ENCODE measurements at regions of chr11 and their contacts with region 1.

Region 1: GRCh38 chr11:117946842-117947526 is 17.8 kb upstream of the TMPRSS13 start:
- DNase-seq: peak; percentile 88
- H3K4me3 ChIP-seq: no peak overlapping the region
- H3K27ac ChIP-seq: peak overlapping the region; percentile 9
- H3K4me1 ChIP-seq: peaks cover 18% of the 10 kb centered on the region
- H3K27me3 ChIP-seq: peaks cover 4 to 9% of the 10 kb centered on the region in 2 experiments
- CTCF ChIP-seq: peak; percentile 91 to 94
- POLR2A ChIP-seq: no peak

Region 2: DNA sequence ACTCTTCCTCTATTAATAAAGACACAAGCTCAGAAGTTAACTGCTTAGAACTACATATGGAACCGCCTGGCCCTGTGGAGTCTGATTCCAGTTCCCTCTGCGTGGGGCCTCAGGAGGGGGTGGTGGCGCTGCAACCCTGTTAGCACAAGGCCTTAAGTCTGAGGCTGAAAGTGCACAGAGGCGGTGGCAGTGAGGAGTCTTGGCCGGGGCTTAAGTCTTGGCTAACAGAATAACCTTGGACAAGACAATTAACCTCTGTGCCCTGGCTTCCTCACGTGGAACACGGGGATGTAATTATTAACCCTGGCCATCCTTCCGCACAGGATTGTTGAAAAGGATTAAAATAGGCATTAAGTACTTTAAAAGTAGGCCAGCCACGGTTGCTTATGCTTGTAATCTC is 427.8 kb before region 1 on chr11:
- CTCF ChIA-PET with region 1: no interaction called
- POLR2A ChIA-PET with region 1: no interaction called
- dilution Hi-C with region 1: no loop called
- intact Hi-C with region 1: no loop called
- DNase-seq: no peak
- H3K4me3 ChIP-seq: no peak overlapping the region
- H3K27ac ChIP-seq: no peak overlapping the region
- H3K4me1 ChIP-seq: no peaks in the 10 kb centered on the region
- H3K27me3 ChIP-seq: no peaks in the 10 kb centered on the region
- CTCF ChIP-seq: no peak
- POLR2A ChIP-seq: no peak

Region 3: DNA sequence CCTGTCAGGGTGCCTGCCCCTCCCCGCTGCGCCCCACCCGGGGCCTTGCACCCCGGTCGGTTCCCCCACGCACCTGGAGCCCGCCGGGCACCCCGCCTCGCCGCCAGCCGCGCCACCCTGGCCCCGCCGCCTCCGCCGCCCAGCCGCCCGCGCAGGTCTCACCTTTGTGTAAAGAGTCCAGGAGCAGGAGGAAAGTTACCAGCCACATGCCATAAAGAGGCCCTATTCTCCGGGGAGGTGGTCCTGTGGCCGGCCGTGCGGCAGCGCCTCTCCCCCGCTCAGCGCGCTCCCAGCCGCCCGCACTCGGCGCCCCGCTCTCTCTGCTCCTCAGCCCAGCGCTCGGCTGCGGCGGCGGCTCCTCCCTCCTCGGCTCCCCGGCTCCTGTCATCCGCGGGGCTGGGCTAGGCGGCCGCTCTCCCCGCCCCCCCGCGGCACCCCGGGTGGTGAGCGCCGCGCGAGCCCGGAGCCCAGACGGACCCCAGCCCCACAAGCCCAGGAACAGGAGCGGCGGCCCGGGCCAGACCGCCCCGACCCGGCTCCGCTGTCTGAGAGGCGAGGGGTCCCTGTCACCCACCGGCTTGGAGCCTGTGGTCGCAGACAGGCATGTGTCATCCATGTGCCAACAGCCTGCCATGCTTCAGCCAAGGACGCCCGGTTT is 150.0 kb before region 1 on chr11 and contains the start of gene DSCAML1:
- CTCF ChIA-PET with region 1: interaction called, 21 read pairs
- POLR2A ChIA-PET with region 1: no interaction called
- dilution Hi-C with region 1: no loop called
- intact Hi-C with region 1: no loop called
- DNase-seq: no peak
- H3K4me3 ChIP-seq: no peak within 1 kb of the TSS
- H3K27ac ChIP-seq: no peak within 1 kb of the TSS
- H3K4me1 ChIP-seq: no peaks in the 10 kb centered on the region
- H3K27me3 ChIP-seq: peaks cover 44 to 46% of the 10 kb centered on the region in 2 experiments
- CTCF ChIP-seq: no peak
- POLR2A ChIP-seq: no peak
- total RNA-seq, gene DSCAML1: not detected in 2 replicates

Region 4: GRCh38 chr11:117828611-117829368 is 118.2 kb before region 1 on chr11:
- CTCF ChIA-PET with region 1: interaction called, 520 read pairs
- POLR2A ChIA-PET with region 1: no interaction called
- dilution Hi-C with region 1: no loop called
- intact Hi-C with region 1: loop called (anchors 1 kb)
- DNase-seq: peak; percentile 54
- H3K4me3 ChIP-seq: no peak overlapping the region
- H3K27ac ChIP-seq: peak overlapping the region; percentile 2
- H3K4me1 ChIP-seq: peaks cover 28% of the 10 kb centered on the region
- H3K27me3 ChIP-seq: no peaks in the 10 kb centered on the region
- CTCF ChIP-seq: no peak
- POLR2A ChIP-seq: no peak

Region 5: DNA sequence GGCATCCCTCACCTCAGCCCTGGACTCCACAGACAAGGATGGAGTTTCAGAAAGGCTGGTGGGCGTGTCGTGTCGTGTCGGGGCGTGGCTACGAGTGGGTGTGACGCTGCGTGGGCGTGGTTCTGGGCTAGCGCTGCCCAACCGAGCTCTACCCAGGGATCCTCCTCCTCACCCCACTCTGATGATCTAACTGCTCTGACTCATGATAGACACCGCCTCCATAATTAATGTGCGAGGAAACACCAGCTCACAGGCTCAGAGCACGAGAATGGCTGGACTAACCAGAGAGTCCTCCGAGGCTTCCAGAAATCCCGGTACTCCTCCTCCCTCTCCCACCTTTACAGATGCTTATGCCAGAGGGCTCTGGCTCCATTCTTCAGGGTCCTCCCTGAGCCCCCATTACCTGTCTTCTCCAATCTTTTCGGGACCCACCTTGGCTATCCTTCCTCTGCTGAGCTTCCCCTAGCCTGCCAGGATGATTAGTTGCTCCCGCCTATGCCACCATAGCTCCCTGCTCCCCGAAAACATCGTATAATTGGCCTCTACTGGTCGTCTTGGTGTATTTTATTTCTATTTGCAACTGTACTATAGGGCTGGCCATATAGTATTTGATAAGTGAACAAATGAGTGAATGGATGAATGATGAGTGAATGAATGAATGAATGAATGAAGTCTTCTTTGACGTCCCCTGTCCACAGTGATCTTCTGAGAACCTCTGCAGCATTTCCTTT is 39.6 kb before region 1 on chr11:
- CTCF ChIA-PET with region 1: interaction called, 46 read pairs
- POLR2A ChIA-PET with region 1: interaction called, 3 read pairs
- dilution Hi-C with region 1: no loop called
- intact Hi-C with region 1: loop called (anchors 1 kb)
- DNase-seq: peak; percentile 94
- H3K4me3 ChIP-seq: no peak overlapping the region
- H3K27ac ChIP-seq: peak overlapping the region; percentile 49
- H3K4me1 ChIP-seq: peaks cover 5% of the 10 kb centered on the region
- H3K27me3 ChIP-seq: no peaks in the 10 kb centered on the region
- CTCF ChIP-seq: no peak
- POLR2A ChIP-seq: no peak

Region 6: DNA sequence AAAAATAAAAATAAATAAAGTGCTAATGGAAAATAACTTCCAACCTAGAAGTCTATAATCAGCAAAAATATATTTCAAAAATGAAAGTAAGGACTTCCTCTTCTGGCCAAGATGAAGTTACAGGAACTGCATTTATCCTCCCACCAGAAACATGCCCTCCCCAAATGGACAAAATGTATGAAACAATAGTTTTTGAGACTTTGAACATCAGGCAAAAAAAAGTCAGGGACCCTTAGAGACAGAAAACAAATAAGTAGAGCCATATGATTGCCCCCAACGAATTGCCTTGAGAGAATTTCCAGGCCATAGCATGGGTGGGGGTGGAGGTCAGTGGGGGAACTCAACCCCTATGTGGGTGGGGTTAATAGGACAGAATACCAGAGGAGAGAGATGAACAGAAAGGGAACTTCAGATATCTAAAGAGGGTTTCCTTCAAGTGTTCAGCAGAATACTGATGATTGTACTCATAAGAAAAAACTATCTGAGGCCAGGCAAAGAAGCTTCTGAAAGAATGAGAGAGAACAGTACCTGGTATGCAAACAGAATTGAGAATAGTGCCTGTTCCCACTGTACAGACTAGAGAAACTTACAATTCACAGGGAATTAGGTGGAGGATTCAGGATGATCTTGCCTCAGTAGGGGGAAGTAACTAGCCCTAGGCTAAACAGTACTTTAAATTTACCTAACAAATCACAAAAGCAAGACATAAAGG is 12.6 kb after region 1 on chr11:
- CTCF ChIA-PET with region 1: interaction called, 10 read pairs
- POLR2A ChIA-PET with region 1: no interaction called
- dilution Hi-C with region 1: no loop called
- intact Hi-C with region 1: no loop called
- DNase-seq: no peak
- H3K4me3 ChIP-seq: no peak overlapping the region
- H3K27ac ChIP-seq: no peak overlapping the region
- H3K4me1 ChIP-seq: no peaks in the 10 kb centered on the region
- H3K27me3 ChIP-seq: peaks cover 10 to 17% of the 10 kb centered on the region in 2 experiments
- CTCF ChIP-seq: no peak
- POLR2A ChIP-seq: no peak

Region 7: DNA sequence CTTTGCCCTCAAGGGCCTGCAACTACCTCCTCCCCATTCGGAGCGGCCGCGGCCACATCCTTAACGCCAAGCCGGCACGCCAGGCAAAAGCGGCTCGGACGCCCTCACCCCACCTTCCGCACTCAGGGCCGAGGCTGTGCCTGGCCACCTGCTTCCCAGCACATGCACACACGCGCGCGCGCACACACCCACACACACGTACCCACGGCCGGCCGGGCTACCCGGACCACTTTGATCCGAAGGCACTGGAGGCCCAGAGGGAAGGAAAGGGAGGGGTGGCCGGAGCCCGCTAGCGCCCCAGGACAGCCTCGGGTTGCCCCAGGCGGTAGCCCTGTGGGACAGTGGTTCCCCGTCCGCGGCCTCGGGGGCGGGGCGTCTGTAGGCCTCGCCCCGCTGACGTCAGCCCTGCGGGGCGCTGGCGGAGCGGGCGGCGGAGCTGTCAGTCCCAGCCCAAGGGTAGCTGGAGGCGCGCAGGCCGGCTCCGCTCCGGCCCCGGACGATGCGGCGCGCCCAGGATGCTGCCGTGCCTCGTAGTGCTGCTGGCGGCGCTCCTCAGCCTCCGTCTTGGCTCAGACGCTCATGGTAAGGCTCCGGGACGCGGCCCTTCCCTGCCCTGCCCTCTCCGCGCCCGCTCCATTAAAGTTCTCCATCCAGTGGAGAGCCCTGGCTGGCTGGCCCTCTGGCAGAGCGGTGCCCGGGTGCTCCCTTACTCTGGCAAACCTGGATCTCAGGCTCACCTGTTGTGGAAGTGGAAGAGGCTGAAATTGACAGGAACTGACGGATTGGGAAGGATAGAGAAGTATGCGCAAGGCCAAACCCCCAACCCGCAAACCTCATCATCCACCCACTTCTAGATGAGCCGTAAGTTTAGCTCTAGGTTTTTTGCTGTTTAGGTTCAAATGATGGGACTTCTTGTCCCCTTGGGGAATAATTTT is 39.2 kb after region 1 on chr11 and contains the start of gene IL10RA:
- CTCF ChIA-PET with region 1: interaction called, 20 read pairs
- POLR2A ChIA-PET with region 1: no interaction called
- dilution Hi-C with region 1: no loop called
- intact Hi-C with region 1: no loop called
- DNase-seq: peak; percentile 78
- H3K4me3 ChIP-seq: peak within 1 kb of the TSS in 2 of 3 experiments; percentile 37 to 49
- H3K27ac ChIP-seq: no peak within 1 kb of the TSS
- H3K4me1 ChIP-seq: peaks cover 4% of the 10 kb centered on the region
- H3K27me3 ChIP-seq: peaks cover 12 to 17% of the 10 kb centered on the region in 2 experiments
- CTCF ChIP-seq: no peak
- POLR2A ChIP-seq: no peak
- total RNA-seq, gene IL10RA: 0.14 TPM in 1 of 2 replicates, not detected in the other